Mammary epithelial cell (primary cell): ENCODE measurements at regions of chr13 and their contacts with region 1.

Region 1: GRCh38 chr13:96551546-96551945 is 442.7 kb downstream of the OXGR1 start:
- DNase-seq: no peak
- H3K4me3 ChIP-seq: no peak overlapping the region
- H3K27ac ChIP-seq: no peak overlapping the region
- H3K4me1 ChIP-seq: no peaks in the 10 kb centered on the region
- H3K27me3 ChIP-seq: no peaks in the 10 kb centered on the region
- CTCF ChIP-seq: no peak

Region 2: GRCh38 chr13:96527497-96527896 is 24.0 kb before region 1 on chr13:
- CTCF ChIA-PET with region 1: no interaction called
- dilution Hi-C with region 1: no loop called
- in situ Hi-C with region 1: no loop called
- intact Hi-C with region 1: no loop called
- DNase-seq: no peak
- H3K4me3 ChIP-seq: no peak overlapping the region
- H3K27ac ChIP-seq: no peak overlapping the region
- H3K4me1 ChIP-seq: no peaks in the 10 kb centered on the region
- H3K27me3 ChIP-seq: no peaks in the 10 kb centered on the region
- CTCF ChIP-seq: no peak

Region 3: DNA sequence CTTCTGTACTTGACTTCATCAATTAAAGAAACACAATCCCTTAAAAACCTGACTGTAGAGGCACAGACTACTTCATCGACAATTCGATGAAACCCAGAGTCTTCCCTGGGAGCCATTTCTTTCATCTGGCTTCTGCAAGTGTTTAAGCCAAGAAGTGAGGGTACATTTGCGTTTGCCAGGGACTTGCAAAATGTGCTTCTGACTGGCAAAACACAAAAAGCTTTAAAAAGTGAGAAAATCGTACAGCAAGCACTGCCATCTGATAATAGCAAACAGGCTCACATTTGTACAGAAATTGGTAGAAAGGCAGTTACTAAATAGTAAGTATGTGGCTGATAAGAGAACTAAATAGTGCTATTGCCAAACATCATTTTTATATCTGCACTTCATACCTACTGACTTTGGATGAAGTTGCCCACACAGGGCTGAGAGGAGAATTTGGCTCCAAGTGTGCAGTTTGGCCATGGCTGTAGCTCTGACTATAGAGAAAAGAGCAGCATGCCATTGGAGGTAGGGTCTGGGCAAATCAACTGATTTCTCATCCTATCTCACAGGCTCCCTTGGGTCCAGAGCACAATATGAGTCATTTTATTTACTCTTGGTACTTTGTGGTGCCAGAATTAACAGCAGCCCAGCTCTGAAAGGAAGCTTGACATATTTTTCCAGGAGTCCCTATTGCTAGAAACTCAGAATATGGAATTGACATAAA is 84.6 kb after region 1 on chr13:
- CTCF ChIA-PET with region 1: no interaction called
- dilution Hi-C with region 1: loop called (anchors 5 kb)
- in situ Hi-C with region 1: no loop called
- intact Hi-C with region 1: no loop called
- DNase-seq: no peak
- H3K4me3 ChIP-seq: no peak overlapping the region
- H3K27ac ChIP-seq: no peak overlapping the region
- H3K4me1 ChIP-seq: no peaks in the 10 kb centered on the region
- H3K27me3 ChIP-seq: no peaks in the 10 kb centered on the region
- CTCF ChIP-seq: no peak